B cell (primary cell): ENCODE measurements at regions of chr1 and their contacts with region 1.

Region 1: DNA sequence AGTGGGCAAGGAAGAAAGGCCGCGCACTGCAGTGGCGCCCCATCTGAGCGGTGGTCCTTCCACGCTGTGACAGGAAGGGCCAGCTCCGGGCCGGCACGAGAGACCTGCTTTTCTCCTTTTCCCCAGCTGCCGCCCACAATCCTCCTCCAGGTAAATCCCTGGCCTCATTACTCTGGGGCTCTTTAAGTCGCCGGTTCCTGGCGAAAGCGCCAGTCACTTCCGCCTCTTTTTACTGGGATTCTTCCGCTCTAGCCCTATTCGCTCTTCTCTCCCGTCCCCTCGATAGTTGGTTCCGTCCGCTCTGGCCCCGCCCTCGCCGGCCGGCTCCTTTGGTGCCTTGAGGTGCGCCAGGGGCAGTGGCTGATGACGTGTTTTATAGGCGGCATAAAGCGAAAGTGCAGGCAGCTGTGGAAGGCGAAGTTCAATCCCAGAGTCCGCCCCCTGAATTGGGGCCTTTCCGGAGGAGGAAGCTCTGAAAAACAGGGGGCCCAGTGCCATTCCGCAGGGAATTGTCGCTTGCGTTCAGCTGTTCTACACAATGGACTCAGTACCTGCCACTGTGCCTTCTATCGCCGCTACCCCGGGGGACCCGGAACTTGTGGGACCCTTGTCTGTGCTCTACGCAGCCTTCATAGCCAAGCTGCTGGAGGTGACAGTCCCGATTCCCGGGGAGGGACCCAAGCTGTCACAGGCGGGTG is 26.2 kb downstream of the MIA3 start:
- DNase-seq: peak; percentile 98
- ATAC-seq: peak; percentile 96
- H3K4me3 ChIP-seq: peak overlapping the region; percentile 71 to 98 (median 95)
- H3K4me3 Mint-ChIP-seq: peak overlapping the region; percentile 86
- H3K27ac ChIP-seq: peak overlapping the region; percentile 97
- H3K27ac Mint-ChIP-seq: peak overlapping the region; percentile 91
- H3K4me1 ChIP-seq: peaks cover 13 to 15% of the 10 kb centered on the region in 2 donors
- H3K4me1 Mint-ChIP-seq: peaks cover 30% of the 10 kb centered on the region
- H3K27me3 ChIP-seq: no peaks in the 10 kb centered on the region
- H3K27me3 Mint-ChIP-seq: no peaks in the 10 kb centered on the region
- CTCF ChIP-seq: no peak

Region 2: GRCh38 chr1:222589462-222590302 is 54.4 kb before region 1 on chr1 and contains the start of gene TAF1A:
- CTCF ChIA-PET with region 1: interaction called, 3 read pairs
- POLR2A ChIA-PET with region 1: no interaction called
- intact Hi-C with region 1: loop called (anchors 1 kb)
- DNase-seq: peak; percentile 87
- ATAC-seq: peak; percentile 99
- H3K4me3 ChIP-seq: peak within 1 kb of the TSS; percentile 68 to 95 (median 93)
- H3K4me3 Mint-ChIP-seq: peak within 1 kb of the TSS; percentile 98
- H3K27ac ChIP-seq: peak within 1 kb of the TSS; percentile 66 to 92
- H3K27ac Mint-ChIP-seq: peak within 1 kb of the TSS; percentile 98
- H3K4me1 ChIP-seq: peaks cover 28 to 37% of the 10 kb centered on the region in 2 donors
- H3K4me1 Mint-ChIP-seq: peaks cover 54% of the 10 kb centered on the region
- H3K27me3 ChIP-seq: no peaks in the 10 kb centered on the region
- H3K27me3 Mint-ChIP-seq: no peaks in the 10 kb centered on the region
- CTCF ChIP-seq: no peak
- total RNA-seq, gene TAF1A: 23.7 and 25.9 TPM in 2 replicates

Region 3: DNA sequence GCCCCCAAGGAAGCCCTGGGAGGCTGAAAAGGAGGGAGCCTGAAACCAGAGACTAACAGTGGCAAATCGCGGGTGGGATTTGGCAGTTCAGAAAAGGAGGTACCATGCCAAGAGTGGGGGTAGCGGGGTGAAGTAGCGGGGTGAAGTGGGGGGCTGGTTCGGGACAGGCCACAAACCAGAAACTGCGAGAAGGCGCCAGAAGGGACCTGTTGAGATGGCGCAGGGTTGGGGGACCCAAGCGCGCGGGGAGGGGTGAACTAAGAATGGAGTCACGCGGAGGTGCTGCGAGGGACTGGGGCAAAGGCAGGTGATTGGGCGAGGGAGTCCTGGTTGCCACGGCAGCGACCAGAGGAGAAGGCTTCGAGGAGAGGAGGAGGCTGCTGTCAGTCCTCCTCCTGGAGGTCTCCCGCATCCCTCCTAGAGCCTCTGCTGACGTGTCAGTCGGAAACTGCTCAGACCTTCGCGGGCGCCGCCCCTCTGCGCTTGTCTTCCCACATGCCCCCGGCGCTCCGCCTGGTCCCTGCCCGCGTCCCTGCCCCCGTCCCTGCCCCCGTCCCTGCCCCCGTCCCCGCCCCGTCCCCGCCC is 26.6 kb before region 1 on chr1:
- CTCF ChIA-PET with region 1: no interaction called
- POLR2A ChIA-PET with region 1: interaction called, 12 read pairs
- intact Hi-C with region 1: loop called (anchors 1 kb)
- DNase-seq: peak; percentile 95
- ATAC-seq: peak; percentile 90
- H3K4me3 ChIP-seq: peak overlapping the region; percentile 6 to 91 (median 67)
- H3K4me3 Mint-ChIP-seq: peak overlapping the region; percentile 96
- H3K27ac ChIP-seq: peak overlapping the region; percentile 71 to 82
- H3K27ac Mint-ChIP-seq: peak overlapping the region; percentile 95
- H3K4me1 ChIP-seq: peaks cover 17 to 18% of the 10 kb centered on the region in 2 donors
- H3K4me1 Mint-ChIP-seq: peaks cover 29% of the 10 kb centered on the region
- H3K27me3 ChIP-seq: peaks cover 0 to 15% (median 6%) of the 10 kb centered on the region in 4 experiments
- H3K27me3 Mint-ChIP-seq: peaks cover 19% of the 10 kb centered on the region
- CTCF ChIP-seq: no peak

Region 4: DNA sequence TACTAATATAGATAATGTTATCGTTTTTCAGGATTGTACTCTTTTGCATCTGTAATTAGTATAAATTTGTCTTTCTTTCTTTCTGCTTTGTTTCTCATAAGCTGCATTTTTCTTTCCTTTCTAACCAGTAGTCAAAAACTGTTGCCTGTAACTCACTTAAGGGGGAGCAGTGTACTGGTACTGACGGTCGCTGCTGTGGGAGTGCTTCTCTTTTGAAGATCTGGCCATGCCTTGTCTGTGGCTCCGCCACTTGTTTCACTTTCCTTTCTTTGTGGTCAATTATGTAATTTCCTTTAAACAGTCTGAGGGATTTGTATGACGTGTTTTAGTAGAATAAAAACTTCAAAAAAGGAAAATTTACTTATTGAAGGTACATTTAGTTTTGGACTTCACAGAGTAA is 10.8 kb after region 1 on chr1:
- CTCF ChIA-PET with region 1: interaction called, 5 read pairs
- POLR2A ChIA-PET with region 1: interaction called, 5 read pairs
- intact Hi-C with region 1: loop called (anchors 1 kb)
- DNase-seq: peak; percentile 88
- ATAC-seq: peak; percentile 99
- H3K4me3 ChIP-seq: no peak overlapping the region
- H3K4me3 Mint-ChIP-seq: peak overlapping the region; percentile 40
- H3K27ac ChIP-seq: peak overlapping the region; percentile 81 to 95
- H3K27ac Mint-ChIP-seq: peak overlapping the region; percentile 59
- H3K4me1 ChIP-seq: peaks cover 16 to 20% of the 10 kb centered on the region in 2 donors
- H3K4me1 Mint-ChIP-seq: peaks cover 35% of the 10 kb centered on the region
- H3K27me3 ChIP-seq: no peaks in the 10 kb centered on the region
- H3K27me3 Mint-ChIP-seq: no peaks in the 10 kb centered on the region
- CTCF ChIP-seq: peak; percentile 51